Thyroid gland (tissue), 4 donors: ENCODE measurements at regions of chr2 and their contacts with region 1.

Region 1: DNA sequence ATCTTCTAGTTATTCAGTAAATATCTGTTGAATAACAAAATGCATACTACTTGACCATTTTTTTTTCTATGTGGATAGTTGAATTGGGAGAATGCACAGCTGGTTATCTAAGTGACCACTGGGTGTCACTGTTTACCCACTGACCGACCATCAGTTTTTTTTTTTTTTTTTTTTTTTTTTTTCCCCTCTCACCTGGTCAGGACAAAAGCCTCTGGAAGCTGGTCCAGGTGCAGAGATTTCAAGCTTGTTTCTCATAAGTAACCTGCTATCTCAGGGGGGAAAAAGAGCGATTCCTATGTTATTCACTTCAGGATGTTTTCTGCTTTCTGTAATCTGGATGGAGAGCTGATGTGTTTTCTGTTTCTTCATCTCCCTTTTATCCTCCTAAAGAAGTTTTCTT is 256.0 kb downstream of the DCDC2C start:
- DNase-seq: peak in 1 of 2 donors; percentile 14
- H3K4me3 ChIP-seq: no peak overlapping the region
- H3K27ac ChIP-seq: no peak overlapping the region
- H3K4me1 ChIP-seq: no peaks in the 10 kb centered on the region
- H3K27me3 ChIP-seq: no peaks in the 10 kb centered on the region
- CTCF ChIP-seq: peak; percentile 18 to 83 (median 60)
- POLR2A ChIP-seq: no peak

Region 2: DNA sequence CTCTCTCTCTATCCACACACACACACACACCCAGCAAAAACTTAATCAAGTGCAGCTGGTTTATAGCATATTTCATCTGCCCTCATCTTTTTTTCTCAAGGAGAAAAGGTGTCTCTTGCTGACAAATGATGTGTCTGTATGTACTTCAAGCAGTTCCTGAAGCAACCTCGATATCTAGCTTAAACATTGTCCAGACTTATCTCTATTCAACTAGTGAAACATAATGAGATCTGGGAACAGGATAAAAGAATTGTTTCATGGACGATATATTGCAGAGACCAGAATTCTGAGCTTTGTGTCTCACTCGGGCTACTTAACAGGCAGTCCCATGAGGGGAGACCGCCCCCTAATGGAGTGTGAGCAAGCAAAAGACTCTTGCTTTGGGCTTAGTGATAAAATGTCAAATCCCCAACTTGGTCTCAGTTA is 803.6 kb after region 1 on chr2:
- intact Hi-C with region 1: loop called (anchors 10 kb)
- DNase-seq: peak; percentile 69 to 78
- H3K4me3 ChIP-seq: no peak overlapping the region
- H3K27ac ChIP-seq: no peak overlapping the region
- H3K4me1 ChIP-seq: no peaks in the 10 kb centered on the region
- H3K27me3 ChIP-seq: no peaks in the 10 kb centered on the region
- CTCF ChIP-seq: peak; percentile 21 to 69 (median 56)
- POLR2A ChIP-seq: no peak

Region 3: GRCh38 chr2:5365871-5366461 is 1406.6 kb after region 1 on chr2:
- intact Hi-C with region 1: loop called (anchors 10 kb)
- DNase-seq: peak; percentile 72 to 83
- H3K4me3 ChIP-seq: no peak overlapping the region
- H3K27ac ChIP-seq: no peak overlapping the region
- H3K4me1 ChIP-seq: no peaks in the 10 kb centered on the region
- H3K27me3 ChIP-seq: no peaks in the 10 kb centered on the region
- CTCF ChIP-seq: peak; percentile 59 to 91 (median 80)
- POLR2A ChIP-seq: no peak